ENCODE measurements at regions of chr4 and their contacts with region 1.

Region 1: GRCh38 chr4:152255437-152256011 is 280.4 kb downstream of the FBXW7 start:
- DNase-seq: peak; percentile 85
- H3K4me3 Mint-ChIP-seq: peak overlapping the region; percentile 5
- H3K27ac Mint-ChIP-seq: no peak overlapping the region
- H3K4me1 Mint-ChIP-seq: peaks cover 19% of the 10 kb centered on the region
- H3K27me3 Mint-ChIP-seq: no peaks in the 10 kb centered on the region

Region 2: GRCh38 chr4:151540728-151541422 is 714.6 kb before region 1 on chr4:
- CTCF ChIA-PET with region 1: no interaction called
- POLR2A ChIA-PET with region 1: no interaction called
- intact Hi-C with region 1: no loop called
- DNase-seq: no peak
- H3K4me3 Mint-ChIP-seq: no peak overlapping the region
- H3K27ac Mint-ChIP-seq: no peak overlapping the region
- H3K4me1 Mint-ChIP-seq: no peaks in the 10 kb centered on the region
- H3K27me3 Mint-ChIP-seq: peaks cover 1% of the 10 kb centered on the region

Region 3: GRCh38 chr4:152229782-152230289 is 25.7 kb before region 1 on chr4:
- CTCF ChIA-PET with region 1: no interaction called
- POLR2A ChIA-PET with region 1: no interaction called
- intact Hi-C with region 1: no loop called
- DNase-seq: no peak
- H3K4me3 Mint-ChIP-seq: no peak overlapping the region
- H3K27ac Mint-ChIP-seq: no peak overlapping the region
- H3K4me1 Mint-ChIP-seq: no peaks in the 10 kb centered on the region
- H3K27me3 Mint-ChIP-seq: no peaks in the 10 kb centered on the region

Region 4: GRCh38 chr4:152328596-152328995 is 73.1 kb after region 1 on chr4:
- CTCF ChIA-PET with region 1: no interaction called
- POLR2A ChIA-PET with region 1: no interaction called
- intact Hi-C with region 1: loop called (anchors 5 kb)
- DNase-seq: no peak
- H3K4me3 Mint-ChIP-seq: no peak overlapping the region
- H3K27ac Mint-ChIP-seq: no peak overlapping the region
- H3K4me1 Mint-ChIP-seq: peaks cover 21% of the 10 kb centered on the region
- H3K27me3 Mint-ChIP-seq: no peaks in the 10 kb centered on the region

Region 5: DNA sequence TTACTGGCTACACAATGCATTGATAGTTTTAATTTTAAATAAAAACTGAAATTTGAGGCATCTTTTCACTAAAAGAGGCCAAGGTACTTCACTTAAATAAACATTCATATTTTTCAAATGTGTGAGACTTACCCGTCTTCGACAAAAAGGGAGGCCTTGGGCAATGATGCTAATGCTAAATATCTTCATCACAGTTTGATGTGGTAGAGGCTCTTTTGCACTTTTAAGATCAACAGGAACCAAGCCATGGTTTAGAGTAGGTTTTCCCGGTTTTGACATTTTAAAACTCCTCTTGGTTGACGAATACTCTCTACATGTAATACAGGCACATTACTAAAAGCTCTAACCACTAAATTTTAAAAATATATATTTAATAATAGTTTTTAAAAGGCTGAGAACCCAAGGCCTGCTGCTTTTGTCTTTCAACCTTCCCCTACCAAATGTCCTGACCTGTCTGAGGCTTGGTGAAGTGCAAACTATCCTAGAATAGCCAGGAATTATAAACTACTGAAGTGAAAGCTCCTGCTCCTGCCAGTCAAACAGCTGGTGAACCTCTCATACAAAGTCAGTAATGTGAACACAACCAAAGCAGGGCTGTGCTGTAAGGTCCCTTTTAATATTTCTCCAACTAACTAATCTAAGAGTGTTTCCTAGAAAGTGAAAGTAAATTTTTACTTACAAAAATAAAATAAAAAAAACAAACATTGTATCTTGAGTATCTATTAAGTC is 126.7 kb after region 1 on chr4:
- CTCF ChIA-PET with region 1: no interaction called
- POLR2A ChIA-PET with region 1: no interaction called
- intact Hi-C with region 1: no loop called
- DNase-seq: no peak
- H3K4me3 Mint-ChIP-seq: peak overlapping the region; percentile 52
- H3K27ac Mint-ChIP-seq: peak overlapping the region; percentile 65
- H3K4me1 Mint-ChIP-seq: peaks cover 18% of the 10 kb centered on the region
- H3K27me3 Mint-ChIP-seq: no peaks in the 10 kb centered on the region

Measured in activated CD4-positive, alpha-beta memory T cell treated with anti-CD3 and anti-CD28 coated beads for 36 hours (primary cell).